Endothelial cell of umbilical vein (primary cell): ENCODE measurements at regions of chrX and their contacts with region 1.

Region 1: GRCh38 chrX:9530848-9531274 is 66.0 kb downstream of the TBL1X start:
- DNase-seq: peak; percentile 68
- H3K4me3 ChIP-seq: no peak overlapping the region
- H3K27ac ChIP-seq: no peak overlapping the region
- H3K4me1 ChIP-seq: peaks cover 27% of the 10 kb centered on the region
- H3K27me3 ChIP-seq: no peaks in the 10 kb centered on the region
- CTCF ChIP-seq: no peak
- POLR2A ChIP-seq: no peak

Region 2: GRCh38 chrX:9611436-9612145 is 80.7 kb after region 1 on chrX:
- CTCF ChIA-PET with region 1: interaction called, 3 read pairs
- POLR2A ChIA-PET with region 1: no interaction called
- dilution Hi-C with region 1: no loop called
- intact Hi-C with region 1: loop called (anchors 1 kb)
- DNase-seq: peak; percentile 41
- H3K4me3 ChIP-seq: no peak overlapping the region
- H3K27ac ChIP-seq: peak overlapping the region; percentile 66
- H3K4me1 ChIP-seq: peaks cover 20% of the 10 kb centered on the region
- H3K27me3 ChIP-seq: no peaks in the 10 kb centered on the region
- CTCF ChIP-seq: no peak
- POLR2A ChIP-seq: no peak

Region 3: GRCh38 chrX:9647431-9647830 is 116.6 kb after region 1 on chrX:
- CTCF ChIA-PET with region 1: no interaction called
- POLR2A ChIA-PET with region 1: no interaction called
- dilution Hi-C with region 1: no loop called
- intact Hi-C with region 1: no loop called
- DNase-seq: no peak
- H3K4me3 ChIP-seq: no peak overlapping the region
- H3K27ac ChIP-seq: no peak overlapping the region
- H3K4me1 ChIP-seq: peaks cover 3% of the 10 kb centered on the region
- H3K27me3 ChIP-seq: no peaks in the 10 kb centered on the region
- CTCF ChIP-seq: no peak
- POLR2A ChIP-seq: no peak

Region 4: GRCh38 chrX:9662148-9662547 is 131.3 kb after region 1 on chrX:
- CTCF ChIA-PET with region 1: no interaction called
- POLR2A ChIA-PET with region 1: no interaction called
- dilution Hi-C with region 1: no loop called
- intact Hi-C with region 1: loop called (anchors 1 kb)
- DNase-seq: peak; percentile 64
- H3K4me3 ChIP-seq: no peak overlapping the region
- H3K27ac ChIP-seq: peak overlapping the region; percentile 84
- H3K4me1 ChIP-seq: peaks cover 31% of the 10 kb centered on the region
- H3K27me3 ChIP-seq: no peaks in the 10 kb centered on the region
- CTCF ChIP-seq: no peak
- POLR2A ChIP-seq: no peak